Activated CD4-positive, alpha-beta T cell treated with anti-CD3 and anti-CD28 coated beads, Interleukin-2, amount 10 ng/mL, durations not matched to agents 24 days and 14 days (primary cell): ENCODE measurements at regions of chr5 and their contacts with region 1.

Region 1: GRCh38 chr5:111757355-111758283 is 625 bp upstream of the NREP start:
- DNase-seq: peak; percentile 96
- H3K4me3 Mint-ChIP-seq: peak overlapping the region; percentile 89
- H3K27ac Mint-ChIP-seq: peak overlapping the region; percentile 93
- H3K4me1 Mint-ChIP-seq: peaks cover 23% of the 10 kb centered on the region
- H3K27me3 Mint-ChIP-seq: peaks cover 5% of the 10 kb centered on the region

Region 2: GRCh38 chr5:110757118-110757729 is 1000.4 kb before region 1 on chr5:
- intact Hi-C with region 1: loop called (anchors 10 kb)
- DNase-seq: peak; percentile 81
- H3K4me3 Mint-ChIP-seq: no peak overlapping the region
- H3K27ac Mint-ChIP-seq: no peak overlapping the region
- H3K4me1 Mint-ChIP-seq: peaks cover 28% of the 10 kb centered on the region
- H3K27me3 Mint-ChIP-seq: no peaks in the 10 kb centered on the region

Region 3: GRCh38 chr5:111229871-111230810 is 527.5 kb before region 1 on chr5:
- intact Hi-C with region 1: loop called (anchors 5 kb)
- DNase-seq: peak; percentile 75
- H3K4me3 Mint-ChIP-seq: peak overlapping the region; percentile 86
- H3K27ac Mint-ChIP-seq: peak overlapping the region; percentile 98
- H3K4me1 Mint-ChIP-seq: peaks cover 74% of the 10 kb centered on the region
- H3K27me3 Mint-ChIP-seq: no peaks in the 10 kb centered on the region

Region 4: GRCh38 chr5:111530298-111530740 is 227.3 kb before region 1 on chr5:
- intact Hi-C with region 1: loop called (anchors 1 kb)
- DNase-seq: peak; percentile 95
- H3K4me3 Mint-ChIP-seq: peak overlapping the region; percentile 58
- H3K27ac Mint-ChIP-seq: peak overlapping the region; percentile 84
- H3K4me1 Mint-ChIP-seq: peaks cover 28% of the 10 kb centered on the region
- H3K27me3 Mint-ChIP-seq: no peaks in the 10 kb centered on the region

Region 5: GRCh38 chr5:111603446-111603827 is 154.2 kb before region 1 on chr5:
- intact Hi-C with region 1: no loop called
- DNase-seq: no peak
- H3K4me3 Mint-ChIP-seq: no peak overlapping the region
- H3K27ac Mint-ChIP-seq: no peak overlapping the region
- H3K4me1 Mint-ChIP-seq: no peaks in the 10 kb centered on the region
- H3K27me3 Mint-ChIP-seq: no peaks in the 10 kb centered on the region

Region 6: GRCh38 chr5:111703662-111704061 is 54.0 kb before region 1 on chr5:
- intact Hi-C with region 1: loop called (anchors 5 kb)
- DNase-seq: peak; percentile 79
- H3K4me3 Mint-ChIP-seq: peak overlapping the region; percentile 59
- H3K27ac Mint-ChIP-seq: no peak overlapping the region
- H3K4me1 Mint-ChIP-seq: peaks cover 17% of the 10 kb centered on the region
- H3K27me3 Mint-ChIP-seq: peaks cover 12% of the 10 kb centered on the region

Region 7: DNA sequence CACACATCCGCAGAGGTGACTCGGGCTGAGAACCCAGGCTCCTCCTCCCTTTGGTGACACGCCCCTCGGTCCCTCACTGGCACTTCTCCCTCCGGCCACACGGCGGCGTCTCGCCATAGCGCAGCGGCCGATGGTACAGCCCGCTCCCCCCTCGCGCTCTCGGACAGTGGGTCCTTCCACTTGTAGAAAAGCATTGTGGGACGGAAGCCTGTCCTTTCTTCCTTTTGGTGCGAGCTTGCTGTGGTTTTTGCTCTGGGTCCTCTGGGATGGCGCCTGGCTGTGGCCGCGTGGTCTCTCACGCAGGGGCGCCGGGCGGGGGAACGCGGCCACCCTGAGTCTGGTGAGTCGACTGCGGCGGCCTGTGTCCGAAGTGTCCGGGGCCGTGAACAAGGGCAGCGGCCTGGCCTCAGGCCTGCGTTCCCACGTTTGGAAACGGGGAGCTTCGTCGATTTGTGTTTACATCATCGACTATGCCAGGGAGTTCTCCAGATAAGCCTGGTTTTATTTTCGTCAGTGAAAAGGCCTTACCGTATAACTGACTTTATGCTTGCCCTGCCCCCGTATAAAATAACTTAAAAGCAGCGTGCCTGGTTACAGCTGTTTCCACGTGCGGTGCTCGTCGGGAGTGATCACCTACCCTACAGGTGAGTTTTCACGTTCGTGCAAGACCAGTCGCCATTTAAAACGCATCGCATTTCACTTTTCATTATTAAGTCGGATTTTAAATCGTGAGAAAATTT is 403.2 kb after region 1 on chr5:
- intact Hi-C with region 1: loop called (anchors 2 kb)
- DNase-seq: peak; percentile 98
- H3K4me3 Mint-ChIP-seq: peak overlapping the region; percentile 96
- H3K27ac Mint-ChIP-seq: peak overlapping the region; percentile 94
- H3K4me1 Mint-ChIP-seq: peaks cover 25% of the 10 kb centered on the region
- H3K27me3 Mint-ChIP-seq: peaks cover 2% of the 10 kb centered on the region